Endothelial cell of umbilical vein (primary cell): ENCODE measurements at regions of chr3 and their contacts with region 1.

Region 1: DNA sequence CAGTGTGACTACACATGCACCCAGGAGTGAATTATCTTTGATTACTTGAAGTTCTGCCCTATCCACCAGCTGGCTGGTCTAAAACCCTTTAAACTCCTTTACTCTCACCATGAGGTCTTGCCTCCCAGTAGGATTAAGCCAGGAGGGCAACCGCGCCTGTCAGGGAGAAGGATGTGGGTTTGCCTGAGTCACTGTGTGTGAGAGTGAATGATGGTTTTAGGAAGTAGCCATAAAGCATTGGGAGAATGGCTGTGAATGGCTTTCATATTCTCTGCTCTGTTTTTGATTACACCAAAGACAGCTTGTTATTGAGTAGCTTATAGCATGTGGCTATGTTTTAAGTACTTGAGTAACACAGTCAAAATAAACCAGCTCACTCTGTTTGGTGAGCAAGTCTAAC is 637.7 kb upstream of the TBL1XR1 start:
- DNase-seq: peak; percentile 88
- H3K4me3 ChIP-seq: no peak overlapping the region
- H3K27ac ChIP-seq: no peak overlapping the region
- H3K4me1 ChIP-seq: peaks cover 5% of the 10 kb centered on the region
- H3K27me3 ChIP-seq: no peaks in the 10 kb centered on the region
- CTCF ChIP-seq: no peak
- POLR2A ChIP-seq: no peak

Region 2: DNA sequence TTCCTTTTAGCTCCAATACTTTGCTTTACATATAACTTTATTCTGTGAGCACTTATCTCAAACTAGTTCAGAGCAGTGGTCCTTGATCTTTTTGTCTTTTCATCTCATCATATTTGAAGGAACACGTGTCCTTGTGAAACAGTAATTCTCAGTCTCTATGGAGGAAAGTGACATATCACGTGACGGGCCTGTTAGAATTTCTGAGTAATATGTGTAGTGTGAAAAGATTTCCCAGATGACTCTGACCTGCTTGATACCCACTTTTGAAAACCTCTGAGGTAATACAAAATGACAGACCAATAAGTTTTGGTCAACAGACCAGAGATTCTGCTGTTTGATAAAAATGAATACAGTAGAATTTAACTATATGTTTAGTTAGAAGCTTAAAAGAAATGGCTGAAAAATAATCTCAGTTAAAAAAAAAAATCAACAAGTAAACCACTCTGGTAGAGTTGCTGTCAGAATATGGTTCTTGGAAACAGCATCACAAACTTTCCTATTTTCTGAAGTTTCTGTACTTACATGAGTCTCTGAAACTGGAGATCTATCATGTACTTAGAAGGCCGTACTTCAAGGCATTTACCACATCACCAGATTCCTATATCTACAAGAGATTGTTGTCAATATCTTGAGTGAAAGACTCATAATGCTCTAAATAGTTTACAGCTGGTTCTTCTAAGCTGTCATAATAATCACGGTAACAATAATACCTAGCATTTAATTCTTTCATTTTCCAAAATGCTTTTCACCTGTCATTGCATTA is 47.5 kb before region 1 on chr3:
- CTCF ChIA-PET with region 1: no interaction called
- POLR2A ChIA-PET with region 1: no interaction called
- dilution Hi-C with region 1: no loop called
- intact Hi-C with region 1: no loop called
- DNase-seq: no peak
- H3K4me3 ChIP-seq: no peak overlapping the region
- H3K27ac ChIP-seq: no peak overlapping the region
- H3K4me1 ChIP-seq: no peaks in the 10 kb centered on the region
- H3K27me3 ChIP-seq: no peaks in the 10 kb centered on the region
- CTCF ChIP-seq: no peak
- POLR2A ChIP-seq: no peak

Region 3: GRCh38 chr3:177810162-177810623 is 24.8 kb before region 1 on chr3:
- CTCF ChIA-PET with region 1: interaction called, 3 read pairs
- POLR2A ChIA-PET with region 1: no interaction called
- dilution Hi-C with region 1: no loop called
- intact Hi-C with region 1: loop called (anchors 2 kb)
- DNase-seq: peak; percentile 82
- H3K4me3 ChIP-seq: peak overlapping the region in 1 of 3 experiments; percentile 17
- H3K27ac ChIP-seq: peak overlapping the region; percentile 63
- H3K4me1 ChIP-seq: peaks cover 30% of the 10 kb centered on the region
- H3K27me3 ChIP-seq: no peaks in the 10 kb centered on the region
- CTCF ChIP-seq: no peak
- POLR2A ChIP-seq: no peak